ENCODE measurements at regions of chr11 and their contacts with region 1.

Region 1: DNA sequence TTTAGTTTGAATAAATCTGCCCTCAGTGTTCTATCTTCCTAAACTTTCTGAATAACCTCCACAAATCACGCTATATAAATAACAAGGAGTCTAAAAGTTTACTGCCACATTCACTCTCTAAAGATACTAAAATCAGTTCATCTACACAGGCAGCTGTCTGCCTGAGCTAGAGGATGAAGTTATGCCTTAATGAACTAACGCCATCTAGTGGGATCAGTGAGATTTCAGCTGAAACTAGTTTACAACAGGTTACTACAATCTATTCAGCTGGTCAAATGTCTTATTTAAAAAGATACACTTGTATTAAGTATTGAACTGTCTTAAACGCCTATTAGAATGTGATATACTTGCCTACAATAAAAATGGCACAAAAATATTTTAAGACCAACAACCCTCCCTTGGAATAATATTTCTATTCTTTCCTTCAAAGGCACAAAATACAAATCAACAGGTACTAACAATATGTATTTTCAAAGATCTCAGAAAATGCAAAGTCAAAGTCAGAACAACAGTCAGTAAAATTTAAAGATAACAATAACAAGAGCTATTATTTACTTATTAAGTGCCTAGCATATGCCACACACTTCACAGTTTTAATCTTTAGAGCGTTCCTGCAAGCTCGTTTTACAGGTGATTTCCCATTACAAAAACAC is 84.1 kb downstream of the LARGE2 start:
- DNase-seq: peak; percentile 37
- ATAC-seq: peak; percentile 96
- H3K4me3 ChIP-seq: no peak overlapping the region
- H3K27ac ChIP-seq: no peak overlapping the region
- H3K4me1 ChIP-seq: no peaks in the 10 kb centered on the region
- H3K27me3 ChIP-seq: no peaks in the 10 kb centered on the region
- CTCF ChIP-seq: peak; percentile 71 to 80 (median 72)
- EP300 ChIP-seq: no peak
- POLR2A ChIP-seq: no peak
- RAD21 ChIP-seq: peak; percentile 81

Region 2: DNA sequence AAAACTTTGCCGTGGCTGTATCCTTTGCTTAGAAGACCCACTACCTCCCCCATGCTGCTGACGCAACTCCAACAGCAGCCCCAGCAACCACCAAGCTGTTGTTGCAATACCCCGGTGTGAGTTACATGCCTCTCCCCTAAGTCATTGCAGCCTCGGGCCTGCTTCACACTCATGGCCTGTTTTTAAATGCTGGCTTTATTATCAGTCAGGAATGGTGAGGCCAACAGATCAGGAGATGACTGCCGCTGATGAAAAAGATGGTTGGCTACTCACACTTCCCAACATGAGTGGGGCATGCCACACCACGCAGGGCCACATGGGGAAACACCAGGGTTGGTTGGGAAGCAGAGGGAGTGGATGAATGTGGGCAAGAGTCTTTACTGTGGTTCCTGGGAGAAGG is 548.9 kb before region 1 on chr11:
- CTCF ChIA-PET with region 1: no interaction called
- POLR2A ChIA-PET with region 1: no interaction called
- RAD21 ChIA-PET with region 1: no interaction called
- SMC1A ChIA-PET with region 1: no interaction called
- in situ Hi-C with region 1: no loop called
- intact Hi-C with region 1: no loop called
- DNase-seq: no peak
- ATAC-seq: no peak
- H3K4me3 ChIP-seq: no peak overlapping the region
- H3K27ac ChIP-seq: no peak overlapping the region
- H3K4me1 ChIP-seq: no peaks in the 10 kb centered on the region
- H3K27me3 ChIP-seq: peaks cover 0 to 4% of the 10 kb centered on the region in 2 experiments; a peak in 3 of 4 replicates
- CTCF ChIP-seq: no peak
- EP300 ChIP-seq: no peak
- POLR2A ChIP-seq: no peak
- RAD21 ChIP-seq: no peak

Region 3: DNA sequence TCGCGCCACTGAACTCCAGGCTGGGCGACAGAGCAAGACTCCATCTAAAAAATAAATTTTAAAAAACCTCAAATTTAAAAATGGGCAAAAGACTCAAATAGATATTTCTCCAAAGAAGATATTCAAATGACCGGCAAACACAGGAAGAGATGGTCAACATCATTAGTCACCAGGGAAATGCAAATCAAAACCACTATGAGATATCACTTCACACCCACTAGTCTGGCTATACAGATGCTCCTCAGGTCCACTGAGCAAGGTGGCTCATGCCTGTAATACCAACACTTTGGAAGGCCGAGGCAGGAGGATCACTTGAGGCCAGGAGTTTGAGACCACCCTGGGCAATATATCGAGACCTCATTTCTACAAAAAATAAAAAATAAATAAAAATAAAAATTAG is 244.9 kb before region 1 on chr11:
- CTCF ChIA-PET with region 1: no interaction called
- POLR2A ChIA-PET with region 1: no interaction called
- RAD21 ChIA-PET with region 1: no interaction called
- SMC1A ChIA-PET with region 1: no interaction called
- in situ Hi-C with region 1: no loop called
- intact Hi-C with region 1: no loop called
- DNase-seq: no peak
- ATAC-seq: peak; percentile 67
- H3K4me3 ChIP-seq: no peak overlapping the region
- H3K27ac ChIP-seq: no peak overlapping the region
- H3K4me1 ChIP-seq: no peaks in the 10 kb centered on the region
- H3K27me3 ChIP-seq: peaks cover 0 to 2% of the 10 kb centered on the region in 2 experiments; a peak in 1 of 4 replicates
- CTCF ChIP-seq: no peak
- EP300 ChIP-seq: no peak
- POLR2A ChIP-seq: no peak
- RAD21 ChIP-seq: no peak

Region 4: GRCh38 chr11:45846974-45847910 is 159.3 kb before region 1 on chr11 and contains the start of gene CRY2:
- CTCF ChIA-PET with region 1: interaction called, 36 read pairs
- POLR2A ChIA-PET with region 1: no interaction called
- RAD21 ChIA-PET with region 1: interaction called, 15 read pairs
- SMC1A ChIA-PET with region 1: interaction called, 5 read pairs
- in situ Hi-C with region 1: no loop called
- intact Hi-C with region 1: loop called (anchors 10 kb)
- DNase-seq: peak; percentile 90
- ATAC-seq: peak; percentile 93
- H3K4me3 ChIP-seq: peak within 1 kb of the TSS; percentile 78
- H3K27ac ChIP-seq: peak within 1 kb of the TSS; percentile 48
- H3K4me1 ChIP-seq: peaks cover 5% of the 10 kb centered on the region
- H3K27me3 ChIP-seq: no peaks in the 10 kb centered on the region
- CTCF ChIP-seq: no peak
- EP300 ChIP-seq: peak in 1 of 2 experiments; percentile 58; a peak in 2 of 4 replicates
- POLR2A ChIP-seq: peak; percentile 99
- RAD21 ChIP-seq: no peak
- polyA plus RNA-seq, gene CRY2: 1.2 to 1.4 TPM

Region 5: DNA sequence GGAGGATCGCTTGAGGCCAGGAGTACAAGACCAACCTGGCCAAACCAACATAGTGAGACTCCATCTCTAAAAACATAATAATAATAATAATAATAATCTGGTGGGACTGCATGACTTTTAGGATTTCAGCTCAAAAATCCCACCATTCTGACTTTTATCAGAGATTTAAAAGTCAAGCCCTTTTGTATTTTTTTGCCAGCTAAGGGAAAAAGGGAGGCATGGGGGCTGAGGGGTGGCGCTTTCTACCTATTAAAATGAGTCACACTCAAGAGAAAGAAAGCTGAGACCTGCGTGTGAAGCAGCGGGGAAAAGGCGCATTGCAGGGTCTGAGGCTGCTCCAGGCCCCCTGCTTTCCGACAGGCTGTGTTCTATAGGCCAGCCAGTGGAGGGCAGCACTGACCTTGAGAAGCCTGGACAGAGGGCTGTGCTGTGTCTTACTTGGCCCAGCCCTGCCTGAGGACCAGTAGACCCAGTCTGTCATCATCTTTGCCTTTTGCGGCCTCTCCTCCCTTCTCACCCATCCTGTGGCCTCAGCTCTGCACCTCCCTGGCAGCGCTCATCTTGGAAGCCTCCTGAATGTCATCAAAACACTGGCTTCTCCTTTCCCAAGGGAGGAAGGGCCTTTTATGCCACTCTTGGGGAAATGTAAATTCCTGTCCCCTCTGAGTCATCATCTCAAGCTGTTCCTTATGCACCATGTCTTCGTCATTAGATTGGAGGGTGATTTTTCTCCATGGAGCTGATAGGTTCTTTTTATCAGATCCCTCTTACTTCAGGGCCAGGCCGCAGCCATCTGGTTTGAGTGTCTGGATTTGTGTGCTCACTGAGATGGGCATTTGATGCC is 133.8 kb before region 1 on chr11:
- CTCF ChIA-PET with region 1: interaction called, 63 read pairs
- POLR2A ChIA-PET with region 1: no interaction called
- RAD21 ChIA-PET with region 1: interaction called, 31 read pairs
- SMC1A ChIA-PET with region 1: interaction called, 24 read pairs
- in situ Hi-C with region 1: no loop called
- intact Hi-C with region 1: loop called (anchors 1 kb)
- DNase-seq: no peak
- ATAC-seq: peak; percentile 97
- H3K4me3 ChIP-seq: no peak overlapping the region
- H3K27ac ChIP-seq: no peak overlapping the region
- H3K4me1 ChIP-seq: no peaks in the 10 kb centered on the region
- H3K27me3 ChIP-seq: no peaks in the 10 kb centered on the region
- CTCF ChIP-seq: peak; percentile 54 to 73 (median 63)
- EP300 ChIP-seq: no peak
- POLR2A ChIP-seq: no peak
- RAD21 ChIP-seq: peak; percentile 55

Region 6: GRCh38 chr11:45930031-45930794 is 76.3 kb before region 1 on chr11:
- CTCF ChIA-PET with region 1: interaction called, 10 read pairs
- POLR2A ChIA-PET with region 1: interaction called, 6 read pairs
- RAD21 ChIA-PET with region 1: interaction called, 11 read pairs
- SMC1A ChIA-PET with region 1: interaction called, 9 read pairs
- in situ Hi-C with region 1: no loop called
- intact Hi-C with region 1: no loop called
- DNase-seq: peak; percentile 88
- ATAC-seq: peak; percentile 89
- H3K4me3 ChIP-seq: no peak overlapping the region
- H3K27ac ChIP-seq: peak overlapping the region; percentile 35
- H3K4me1 ChIP-seq: peaks cover 49% of the 10 kb centered on the region
- H3K27me3 ChIP-seq: no peaks in the 10 kb centered on the region; a peak in 1 of 4 replicates
- CTCF ChIP-seq: no peak; a peak in 1 of 6 replicates
- EP300 ChIP-seq: peak; percentile 63 to 81
- POLR2A ChIP-seq: peak; percentile 29; the same call in 1 of the 2 replicates
- RAD21 ChIP-seq: no peak

Region 7: DNA sequence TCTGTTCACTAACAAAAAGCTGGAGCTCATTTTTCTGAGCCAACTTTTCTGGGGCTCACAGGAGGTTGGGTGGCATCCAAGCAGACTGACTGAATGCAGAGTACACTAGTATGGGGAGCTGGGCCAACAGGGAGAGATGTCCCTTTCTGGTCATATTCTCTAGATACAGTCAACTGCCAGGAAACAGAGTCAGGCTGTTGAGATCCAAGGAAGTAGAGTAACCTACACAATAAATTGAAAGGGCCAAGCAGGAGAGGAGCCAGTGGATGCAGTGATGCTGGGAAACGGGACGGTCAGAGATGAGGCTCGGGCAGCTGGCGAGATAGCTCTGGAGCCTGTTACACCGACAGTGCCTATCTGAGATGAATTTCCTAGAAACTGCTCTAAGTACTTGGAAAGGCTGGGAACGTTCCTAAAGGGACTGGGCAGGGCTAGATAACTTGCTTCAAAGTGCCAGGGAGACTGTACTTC is 13.0 kb before region 1 on chr11:
- CTCF ChIA-PET with region 1: interaction called, 59 read pairs
- POLR2A ChIA-PET with region 1: no interaction called
- RAD21 ChIA-PET with region 1: interaction called, 4 read pairs
- SMC1A ChIA-PET with region 1: interaction called, 13 read pairs
- in situ Hi-C with region 1: no loop called
- intact Hi-C with region 1: no loop called
- DNase-seq: no peak
- ATAC-seq: no peak
- H3K4me3 ChIP-seq: no peak overlapping the region
- H3K27ac ChIP-seq: no peak overlapping the region
- H3K4me1 ChIP-seq: no peaks in the 10 kb centered on the region
- H3K27me3 ChIP-seq: no peaks in the 10 kb centered on the region
- CTCF ChIP-seq: no peak
- EP300 ChIP-seq: no peak
- POLR2A ChIP-seq: no peak
- RAD21 ChIP-seq: no peak

Region 8: GRCh38 chr11:46100670-46101069 is 94.1 kb after region 1 on chr11:
- CTCF ChIA-PET with region 1: interaction called, 14 read pairs
- POLR2A ChIA-PET with region 1: no interaction called
- RAD21 ChIA-PET with region 1: interaction called, 3 read pairs
- SMC1A ChIA-PET with region 1: interaction called, 6 read pairs
- in situ Hi-C with region 1: no loop called
- intact Hi-C with region 1: no loop called
- DNase-seq: peak; percentile 71
- ATAC-seq: peak; percentile 91
- H3K4me3 ChIP-seq: peak overlapping the region; percentile 44
- H3K27ac ChIP-seq: peak overlapping the region; percentile 74
- H3K4me1 ChIP-seq: peaks cover 6% of the 10 kb centered on the region; the same call in 1 of the 2 replicates
- H3K27me3 ChIP-seq: no peaks in the 10 kb centered on the region
- CTCF ChIP-seq: no peak
- EP300 ChIP-seq: peak in 1 of 2 experiments; percentile 23; a peak in 1 of 4 replicates
- POLR2A ChIP-seq: no peak
- RAD21 ChIP-seq: 0 out of 2 replicates have a peak, but pooled peaks have one; percentile 2

Region 9: GRCh38 chr11:46345131-46345597 is 338.6 kb after region 1 on chr11:
- CTCF ChIA-PET with region 1: no interaction called
- POLR2A ChIA-PET with region 1: no interaction called
- RAD21 ChIA-PET with region 1: no interaction called
- SMC1A ChIA-PET with region 1: no interaction called
- in situ Hi-C with region 1: no loop called
- intact Hi-C with region 1: no loop called
- DNase-seq: no peak
- ATAC-seq: peak; percentile 45
- H3K4me3 ChIP-seq: peak overlapping the region; percentile 79
- H3K27ac ChIP-seq: peak overlapping the region; percentile 48
- H3K4me1 ChIP-seq: peaks cover 32% of the 10 kb centered on the region
- H3K27me3 ChIP-seq: no peaks in the 10 kb centered on the region; a peak in 1 of 4 replicates
- CTCF ChIP-seq: no peak
- EP300 ChIP-seq: no peak
- POLR2A ChIP-seq: peak; percentile 38; the same call in 1 of the 2 replicates
- RAD21 ChIP-seq: no peak

Measured in GM12878 (cell line).